Lower lobe of right lung (tissue), 2 donors: ENCODE measurements at regions of chr10 and their contacts with region 1.

Region 1: DNA sequence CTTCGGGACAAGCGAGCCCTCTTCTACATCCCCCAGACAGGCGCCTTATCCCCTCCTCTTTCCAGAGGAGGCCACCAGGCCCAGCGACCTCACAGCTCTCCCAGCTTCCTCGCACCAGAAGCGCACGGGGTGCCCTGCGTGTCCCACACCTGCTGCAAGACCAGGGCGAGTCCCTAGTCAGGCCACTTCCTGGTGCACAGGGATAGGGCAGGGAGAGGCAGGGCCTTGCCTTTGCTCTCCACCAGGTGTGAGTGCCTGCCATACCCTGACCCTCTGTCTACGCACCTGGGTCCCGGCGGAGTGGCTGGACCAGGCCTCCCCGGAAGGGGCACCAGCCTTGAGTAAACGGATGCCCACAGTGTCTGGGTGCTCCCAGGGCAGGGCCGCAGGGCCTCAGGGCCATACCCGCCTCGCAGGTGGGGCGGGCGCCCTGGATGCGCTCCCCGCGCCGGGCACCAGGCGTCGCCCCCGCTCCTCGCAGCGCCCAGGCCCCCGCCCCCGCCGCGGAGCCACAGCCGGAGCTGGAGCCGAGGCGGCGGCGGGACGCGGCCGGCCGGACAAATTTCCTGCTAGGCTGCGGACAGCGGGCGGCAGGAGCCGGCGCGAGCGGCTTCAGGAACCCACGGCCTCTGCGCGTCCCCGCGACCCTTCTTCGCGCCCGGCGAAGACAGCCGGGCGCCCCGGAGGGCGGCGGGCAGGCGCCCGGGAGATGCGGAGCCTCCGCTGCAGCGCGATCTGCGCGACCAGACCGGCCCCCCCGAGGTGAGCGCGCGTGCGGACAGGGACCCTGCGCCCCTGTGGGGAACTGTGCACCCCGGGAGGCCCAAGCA is at the start of gene PTPRE:
- DNase-seq: peak; percentile 89
- ATAC-seq: peak; percentile 96 to 97
- H3K4me3 ChIP-seq: peak within 1 kb of the TSS; percentile 75
- H3K27ac ChIP-seq: peak within 1 kb of the TSS; percentile 87
- H3K4me1 ChIP-seq: peaks cover 26% of the 10 kb centered on the region
- H3K27me3 ChIP-seq: peaks cover 4% of the 10 kb centered on the region
- CTCF ChIP-seq: peak; percentile 75
- total RNA-seq, gene PTPRE: 60.5 TPM

Region 2: GRCh38 chr10:128011175-128011979 is 104.6 kb after region 1 on chr10:
- intact Hi-C with region 1: loop called (anchors 5 kb)
- DNase-seq: peak; percentile 89
- ATAC-seq: peak; percentile 77 to 94
- H3K4me3 ChIP-seq: no peak overlapping the region
- H3K27ac ChIP-seq: no peak overlapping the region
- H3K4me1 ChIP-seq: peaks cover 48% of the 10 kb centered on the region
- H3K27me3 ChIP-seq: no peaks in the 10 kb centered on the region
- CTCF ChIP-seq: no peak